Aorta (tissue), 5 donors: ENCODE measurements at regions of chr12 and their contacts with region 1.

Region 1: GRCh38 chr12:116818948-116819832 is 62.1 kb downstream of the HRK start:
- DNase-seq: peak; percentile 94 to 97
- ATAC-seq: peak; percentile 96
- H3K4me3 ChIP-seq: peak overlapping the region; percentile 36 to 79
- H3K27ac ChIP-seq: peak overlapping the region in 1 of 2 donors; percentile 95
- H3K4me1 ChIP-seq: no peaks in the 10 kb centered on the region
- H3K27me3 ChIP-seq: no peaks in the 10 kb centered on the region

Region 2: DNA sequence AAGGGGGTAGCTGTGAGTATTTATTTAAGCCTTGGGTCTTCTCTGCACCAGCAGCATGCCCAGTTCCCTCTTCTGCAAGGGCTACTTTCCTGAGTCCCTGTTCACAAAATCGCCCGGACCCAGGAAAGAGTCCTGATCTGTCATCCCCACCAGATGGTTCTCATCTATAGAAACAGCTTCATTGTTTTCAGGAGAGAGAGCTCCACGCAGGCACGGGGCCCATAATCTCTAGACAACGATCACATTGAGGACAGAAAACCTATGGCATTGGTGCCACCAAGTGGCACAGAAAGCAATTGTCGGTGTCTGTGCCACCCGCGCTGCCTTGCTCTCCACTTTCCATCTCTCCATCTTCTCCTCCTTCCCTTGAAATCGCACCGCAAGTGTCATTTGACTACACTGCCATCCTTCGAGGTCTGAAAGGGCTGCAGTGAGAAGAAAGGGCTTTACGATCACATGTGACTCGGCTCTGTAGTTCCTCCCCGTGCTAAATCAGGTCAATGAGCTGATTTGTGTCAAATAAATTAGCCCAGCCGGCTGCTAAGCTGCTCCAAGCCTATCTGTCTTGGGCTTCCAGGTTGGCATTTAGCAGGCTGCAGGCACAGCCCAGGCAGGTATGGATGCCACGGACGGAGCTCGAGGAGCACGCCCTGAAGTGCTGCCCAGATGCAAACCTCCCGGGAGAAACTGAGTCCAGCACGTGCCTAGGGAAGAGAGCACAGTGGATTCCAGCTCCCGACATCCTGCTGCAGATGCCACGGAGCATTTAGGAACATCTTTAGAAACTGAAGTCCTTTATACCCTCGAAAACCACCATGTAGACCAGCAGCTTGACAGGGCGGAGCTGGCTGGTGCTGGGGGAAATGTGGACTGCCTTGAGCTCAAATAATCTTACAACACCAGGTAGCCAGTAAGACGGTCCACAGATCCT is 110.1 kb before region 1 on chr12:
- intact Hi-C with region 1: no loop called
- DNase-seq: peak in 1 of 2 donors; percentile 67
- ATAC-seq: peak; percentile 81
- H3K4me3 ChIP-seq: no peak overlapping the region
- H3K27ac ChIP-seq: no peak overlapping the region
- H3K4me1 ChIP-seq: no peaks in the 10 kb centered on the region
- H3K27me3 ChIP-seq: no peaks in the 10 kb centered on the region

Region 3: DNA sequence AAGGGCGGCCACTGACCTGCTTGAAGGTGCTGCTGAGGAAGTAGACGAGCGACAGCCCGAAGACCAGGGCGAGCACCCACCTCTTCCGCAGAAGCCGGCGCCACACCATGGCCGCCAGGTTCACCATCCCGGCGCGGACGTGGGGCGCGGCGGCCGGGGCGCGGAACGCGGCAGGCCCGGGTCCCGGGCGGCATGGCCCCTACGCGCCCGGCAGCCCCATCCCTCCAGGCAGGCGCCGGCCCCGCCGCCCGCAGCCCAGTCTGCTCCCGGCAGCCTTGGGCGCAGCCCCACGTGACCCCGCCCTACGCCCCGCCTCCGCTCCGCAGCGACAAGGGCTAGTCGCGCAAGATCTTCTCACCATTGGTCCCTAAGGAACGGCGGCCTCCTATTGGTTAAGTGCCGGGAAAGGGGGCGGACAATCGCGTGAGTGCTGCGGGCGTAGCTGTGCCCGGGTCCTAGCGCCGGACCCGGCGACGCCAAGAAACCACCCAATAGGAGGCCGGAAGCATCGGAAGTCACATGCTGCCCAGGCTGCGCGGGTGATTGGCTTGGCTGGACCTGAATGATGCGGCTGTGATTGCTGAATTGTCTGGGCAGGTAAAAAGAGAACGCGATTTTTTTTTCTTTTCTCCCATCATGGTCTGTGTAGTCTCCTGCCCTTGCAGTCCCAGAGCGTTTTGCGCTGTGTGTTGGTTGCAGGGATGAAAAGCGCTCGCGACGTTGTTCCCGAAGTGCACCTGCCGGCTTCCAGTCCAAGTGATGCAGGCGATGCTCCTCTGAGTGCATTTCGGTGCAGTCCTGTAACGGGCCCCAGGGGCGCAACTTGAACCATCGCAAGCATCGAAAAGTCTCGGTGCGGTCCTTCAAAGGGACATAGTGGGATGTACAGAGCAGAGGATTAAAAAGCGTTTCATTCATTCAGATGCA is 81.2 kb before region 1 on chr12 and contains the starts of genes RNFT2 and SPRING1:
- intact Hi-C with region 1: loop called in 1 of 2 experiments (anchors 2 kb)
- DNase-seq: peak; percentile 99 to 100
- ATAC-seq: peak; percentile 100
- H3K4me3 ChIP-seq: peak within 1 kb of the TSS; percentile 61 to 81
- H3K27ac ChIP-seq: no peak within 1 kb of the TSS
- H3K4me1 ChIP-seq: no peaks in the 10 kb centered on the region
- H3K27me3 ChIP-seq: no peaks in the 10 kb centered on the region
- total RNA-seq, gene RNFT2: 3.0 to 3.1 TPM
- total RNA-seq, gene SPRING1: 16.5 to 18.9 TPM

Region 4: DNA sequence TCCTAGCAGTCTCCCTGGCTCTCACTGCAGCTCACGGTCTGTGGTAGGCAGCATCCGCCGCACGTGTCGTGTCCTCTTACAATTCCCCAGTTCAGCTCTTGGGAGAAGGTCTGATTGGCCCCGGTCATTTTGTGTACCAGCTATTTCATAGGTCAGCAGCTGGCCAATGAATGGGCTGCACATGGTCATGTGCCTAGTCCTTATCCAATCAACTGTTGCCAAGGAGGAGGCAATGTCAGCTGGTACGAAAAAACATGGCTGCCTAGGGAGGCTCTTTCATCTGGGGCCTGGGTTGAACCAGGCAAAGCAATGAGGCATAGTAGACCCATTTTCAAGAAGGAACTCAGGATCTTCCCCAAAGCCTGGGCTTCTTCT is 35.0 kb before region 1 on chr12:
- intact Hi-C with region 1: no loop called
- DNase-seq: no peak
- ATAC-seq: no peak
- H3K4me3 ChIP-seq: no peak overlapping the region
- H3K27ac ChIP-seq: no peak overlapping the region
- H3K4me1 ChIP-seq: no peaks in the 10 kb centered on the region
- H3K27me3 ChIP-seq: no peaks in the 10 kb centered on the region

Region 5: GRCh38 chr12:116861320-116861719 is 42.1 kb after region 1 on chr12:
- intact Hi-C with region 1: loop called (anchors 2 to 5 kb)
- DNase-seq: peak; percentile 81 to 84
- ATAC-seq: no peak
- H3K4me3 ChIP-seq: no peak overlapping the region
- H3K27ac ChIP-seq: no peak overlapping the region
- H3K4me1 ChIP-seq: peaks cover 3 to 11% of the 10 kb centered on the region in 2 donors
- H3K27me3 ChIP-seq: no peaks in the 10 kb centered on the region